ENCODE measurements at regions of chr12 and their contacts with region 1.

Region 1: DNA sequence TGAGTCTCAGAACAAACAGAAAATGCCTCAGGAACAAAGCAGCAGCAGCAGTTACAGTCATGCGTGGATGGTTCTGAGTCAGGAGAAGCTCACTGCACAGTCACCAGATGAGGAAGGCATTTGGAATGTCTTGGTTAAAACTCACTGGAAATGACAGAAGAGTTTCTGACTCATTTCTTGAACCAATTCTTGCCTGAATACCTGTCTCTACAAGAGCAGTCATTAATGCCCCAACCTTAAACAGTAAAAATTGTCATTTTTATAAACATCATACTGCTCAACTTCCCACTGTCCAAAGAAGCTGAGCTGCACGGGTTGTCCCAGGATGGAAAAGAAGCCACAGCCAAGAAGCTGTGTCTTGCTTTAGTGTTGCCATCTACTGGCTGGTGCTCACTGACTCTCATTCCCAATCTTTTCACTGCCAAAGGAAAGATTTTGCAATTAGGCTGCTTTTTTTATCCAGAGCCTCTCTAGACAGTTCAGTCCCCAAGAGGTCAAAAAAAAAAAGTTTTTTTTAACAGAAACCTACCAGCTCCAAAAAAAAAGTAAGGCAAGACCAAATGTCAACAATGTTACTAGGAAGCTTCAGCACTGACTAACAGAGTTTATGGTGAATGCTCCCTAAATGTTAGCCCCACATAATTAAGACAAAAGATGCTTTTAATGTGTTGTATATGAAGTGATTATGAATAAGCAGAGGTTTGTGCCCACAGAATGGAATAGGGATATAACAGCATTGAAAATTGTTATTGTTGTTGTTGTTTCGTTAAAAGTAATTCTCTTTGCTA is 40.4 kb downstream of the KICS2 start:
- DNase-seq: peak; percentile 65 to 71
- H3K4me3 ChIP-seq: no peak overlapping the region
- H3K27ac ChIP-seq: peak overlapping the region; percentile 57 to 76 (median 67)
- H3K4me1 ChIP-seq: peaks cover 17 to 26% of the 10 kb centered on the region in 2 donors
- H3K27me3 ChIP-seq: no peaks in the 10 kb centered on the region
- CTCF ChIP-seq: peak in 5 of 6 experiments; percentile 13 to 80 (median 61)
- POLR2A ChIP-seq: no peak

Region 2: GRCh38 chr12:63843721-63844390 is 337.8 kb before region 1 on chr12:
- intact Hi-C with region 1: loop called (anchors 5 kb)
- DNase-seq: peak; percentile 90 to 93
- H3K4me3 ChIP-seq: peak overlapping the region; percentile 70 to 84 (median 71)
- H3K27ac ChIP-seq: peak overlapping the region; percentile 89 to 98 (median 92)
- H3K4me1 ChIP-seq: peaks cover 8 to 20% of the 10 kb centered on the region in 2 donors
- H3K27me3 ChIP-seq: no peaks in the 10 kb centered on the region
- CTCF ChIP-seq: peak; percentile 62 to 99 (median 94)
- POLR2A ChIP-seq: peak; percentile 33 to 74

Region 3: DNA sequence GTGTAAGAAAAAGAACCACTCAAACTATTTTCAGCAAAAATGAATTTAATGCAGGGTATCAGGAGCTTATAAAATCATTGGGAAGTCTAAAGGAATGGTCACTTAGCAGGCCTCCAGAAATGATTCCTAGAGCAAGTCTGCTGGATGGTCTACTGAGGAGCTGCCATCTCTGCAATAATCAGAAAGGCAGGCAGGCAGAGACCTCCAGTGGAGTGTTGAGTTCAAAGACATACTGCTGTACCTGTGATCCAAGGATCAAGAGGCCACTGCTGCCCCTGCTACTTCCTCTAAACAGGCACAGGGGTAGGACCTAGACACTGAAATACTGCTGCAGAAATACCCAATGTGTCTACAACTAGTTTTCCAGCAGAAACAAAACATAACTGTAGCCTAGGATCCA is 54.9 kb after region 1 on chr12:
- intact Hi-C with region 1: loop called (anchors 10 kb)
- DNase-seq: peak; percentile 32 to 42
- H3K4me3 ChIP-seq: no peak overlapping the region
- H3K27ac ChIP-seq: no peak overlapping the region
- H3K4me1 ChIP-seq: no peaks in the 10 kb centered on the region
- H3K27me3 ChIP-seq: no peaks in the 10 kb centered on the region
- CTCF ChIP-seq: peak in 4 of 6 experiments; percentile 12 to 45 (median 34)
- POLR2A ChIP-seq: no peak

Region 4: GRCh38 chr12:64767495-64767894 is 585.8 kb after region 1 on chr12:
- intact Hi-C with region 1: no loop called
- DNase-seq: no peak
- H3K4me3 ChIP-seq: no peak overlapping the region
- H3K27ac ChIP-seq: no peak overlapping the region
- H3K4me1 ChIP-seq: no peaks in the 10 kb centered on the region
- H3K27me3 ChIP-seq: no peaks in the 10 kb centered on the region
- CTCF ChIP-seq: no peak
- POLR2A ChIP-seq: no peak